Ascending aorta (tissue), 2 donors: ENCODE measurements at regions of chr6 and their contacts with region 1.

Region 1: GRCh38 chr6:107957909-107958688 is at the start of gene SEC63:
- DNase-seq: peak; percentile 89 to 98
- H3K4me3 ChIP-seq: peak within 1 kb of the TSS; percentile 78 to 87
- H3K27ac ChIP-seq: peak within 1 kb of the TSS; percentile 72 to 83
- H3K4me1 ChIP-seq: peaks cover 0 to 21% of the 10 kb centered on the region in 2 donors
- H3K27me3 ChIP-seq: no peaks in the 10 kb centered on the region
- CTCF ChIP-seq: no peak
- total RNA-seq, gene SEC63: 13.1 TPM

Region 2: DNA sequence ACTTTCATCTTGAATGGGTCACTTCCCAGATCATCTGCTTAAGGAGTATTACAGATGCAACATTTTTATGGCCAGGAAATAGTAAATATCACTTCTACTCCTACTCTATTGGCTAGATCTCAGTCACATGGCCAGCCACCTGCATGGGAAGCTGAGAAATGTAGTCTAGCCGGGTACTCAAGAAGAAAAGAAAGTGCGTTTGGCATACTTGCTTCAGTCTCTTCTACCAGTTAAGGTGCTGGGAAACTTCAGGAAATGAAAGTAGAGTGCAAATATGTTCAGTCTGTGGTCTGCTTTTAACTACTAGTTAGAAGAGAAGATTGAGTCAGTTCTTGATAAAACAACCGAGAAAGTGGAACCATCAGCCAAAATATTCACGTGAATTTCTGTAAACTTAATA is 627.9 kb before region 1 on chr6:
- intact Hi-C with region 1: no loop called
- DNase-seq: no peak
- H3K4me3 ChIP-seq: no peak overlapping the region
- H3K27ac ChIP-seq: no peak overlapping the region
- H3K4me1 ChIP-seq: no peaks in the 10 kb centered on the region
- H3K27me3 ChIP-seq: no peaks in the 10 kb centered on the region
- CTCF ChIP-seq: no peak

Region 3: GRCh38 chr6:107459283-107460082 is 498.6 kb before region 1 on chr6 and contains the start of gene PDSS2:
- intact Hi-C with region 1: loop called (anchors 10 kb)
- DNase-seq: peak; percentile 98 to 99
- H3K4me3 ChIP-seq: peak within 1 kb of the TSS; percentile 82 to 92
- H3K27ac ChIP-seq: peak within 1 kb of the TSS; percentile 80 to 91
- H3K4me1 ChIP-seq: peaks cover 3 to 5% of the 10 kb centered on the region in 2 donors
- H3K27me3 ChIP-seq: no peaks in the 10 kb centered on the region
- CTCF ChIP-seq: peak in 2 of 3 experiments; percentile 39 to 53
- total RNA-seq, gene PDSS2: 0.85 TPM

Region 4: DNA sequence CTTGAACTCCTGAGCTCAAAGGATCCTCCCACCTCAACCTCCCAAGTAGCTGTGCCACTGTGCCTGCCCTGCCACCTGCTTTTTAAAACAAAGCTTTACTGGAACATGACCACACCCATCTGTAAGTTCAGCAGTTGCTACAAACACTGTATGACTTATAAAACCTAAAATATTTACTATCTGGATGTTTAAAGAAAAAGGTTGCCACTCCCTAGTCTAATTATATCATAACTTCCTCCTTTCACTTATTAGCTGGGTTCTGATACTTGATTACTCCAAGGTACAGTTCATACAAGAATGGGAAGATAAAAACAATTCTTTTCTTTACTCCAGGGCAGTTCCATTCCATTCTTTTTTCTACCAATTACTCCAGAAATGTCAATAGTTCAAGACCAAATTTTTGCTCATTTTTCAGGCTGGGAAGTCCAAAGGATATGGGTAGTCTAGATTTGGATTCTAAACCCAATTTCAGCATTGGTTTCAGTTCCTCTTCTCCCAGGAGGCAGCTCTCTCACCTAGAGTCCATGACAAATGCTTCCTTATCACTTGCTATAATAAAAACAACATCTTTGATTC is 63.2 kb before region 1 on chr6:
- intact Hi-C with region 1: no loop called
- DNase-seq: no peak
- H3K4me3 ChIP-seq: no peak overlapping the region
- H3K27ac ChIP-seq: no peak overlapping the region
- H3K4me1 ChIP-seq: no peaks in the 10 kb centered on the region
- H3K27me3 ChIP-seq: no peaks in the 10 kb centered on the region
- CTCF ChIP-seq: no peak

Region 5: DNA sequence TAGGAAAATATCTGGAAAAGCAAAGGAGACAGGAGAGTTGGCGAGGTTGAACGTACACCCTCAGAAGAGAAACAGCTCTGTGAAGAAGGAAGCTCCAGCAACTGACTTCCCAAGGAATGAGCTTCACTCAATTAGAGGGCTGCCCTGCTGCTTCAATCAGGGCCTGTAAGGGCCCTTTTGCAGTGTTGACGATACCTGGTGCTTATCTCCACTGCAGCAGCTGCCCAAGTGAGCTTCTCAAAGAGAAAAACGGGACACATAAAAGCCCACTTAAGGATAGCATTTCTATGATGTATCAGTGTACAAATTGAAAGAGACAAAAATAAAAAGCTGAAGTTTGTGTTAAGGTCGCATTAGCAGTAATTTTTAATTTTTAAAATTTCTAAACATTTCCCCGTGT is 16.5 kb before region 1 on chr6:
- intact Hi-C with region 1: no loop called
- DNase-seq: no peak
- H3K4me3 ChIP-seq: no peak overlapping the region
- H3K27ac ChIP-seq: no peak overlapping the region
- H3K4me1 ChIP-seq: peaks cover 0 to 5% of the 10 kb centered on the region in 2 donors
- H3K27me3 ChIP-seq: no peaks in the 10 kb centered on the region
- CTCF ChIP-seq: no peak

Region 6: GRCh38 chr6:108074359-108075144 is 116.5 kb after region 1 on chr6 and contains the start of gene OSTM1:
- intact Hi-C with region 1: loop called (anchors 1 kb)
- DNase-seq: peak; percentile 32 to 95
- H3K4me3 ChIP-seq: peak within 1 kb of the TSS; percentile 87 to 89
- H3K27ac ChIP-seq: peak within 1 kb of the TSS; percentile 74 to 78
- H3K4me1 ChIP-seq: peaks cover 3 to 10% of the 10 kb centered on the region in 2 donors
- H3K27me3 ChIP-seq: no peaks in the 10 kb centered on the region
- CTCF ChIP-seq: no peak
- total RNA-seq, gene OSTM1: 78.7 TPM

Region 7: DNA sequence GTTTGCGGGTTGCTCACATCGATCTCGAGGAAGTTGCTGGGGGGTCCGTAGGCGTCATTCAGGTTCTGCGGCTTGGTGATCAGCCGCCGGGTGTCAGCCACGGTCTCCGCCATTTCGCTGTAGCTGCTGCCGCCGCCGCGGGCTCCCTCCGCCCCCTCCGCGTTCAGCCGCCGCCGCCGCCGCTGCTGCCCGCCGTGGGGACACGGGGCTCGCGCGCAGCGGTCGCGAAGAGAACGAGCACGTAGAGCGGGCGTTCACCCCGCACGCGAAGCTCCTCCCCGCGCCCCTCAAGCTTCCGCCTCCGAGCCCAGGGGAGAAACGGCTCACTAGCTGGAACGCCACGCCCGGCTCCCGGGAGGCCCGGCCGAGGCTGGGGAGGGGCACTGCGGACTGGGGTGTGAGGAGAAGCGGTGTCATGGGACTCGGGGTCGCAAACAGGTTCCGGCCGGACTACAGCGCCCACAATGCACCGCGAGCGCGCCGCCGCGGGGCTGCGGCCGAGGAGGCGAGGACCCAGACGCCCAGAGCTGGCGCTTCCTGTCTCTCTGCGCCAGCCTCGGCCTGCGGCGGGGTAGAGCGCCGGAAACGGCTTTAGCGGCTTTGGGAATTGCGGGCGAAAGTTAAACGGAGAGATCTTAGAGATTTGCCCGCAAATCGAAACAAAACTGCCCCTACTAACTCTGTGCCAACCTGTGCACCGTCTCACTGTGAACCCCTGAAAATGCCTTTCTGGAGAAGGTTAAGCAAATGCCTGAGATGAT is 302.9 kb after region 1 on chr6 and contains the start of gene SNX3:
- intact Hi-C with region 1: loop called (anchors 1 kb)
- DNase-seq: peak; percentile 91 to 98
- H3K4me3 ChIP-seq: peak within 1 kb of the TSS; percentile 88 to 91
- H3K27ac ChIP-seq: peak within 1 kb of the TSS; percentile 93 to 95
- H3K4me1 ChIP-seq: peaks cover 0 to 12% of the 10 kb centered on the region in 2 donors
- H3K27me3 ChIP-seq: no peaks in the 10 kb centered on the region
- CTCF ChIP-seq: no peak
- total RNA-seq, gene SNX3: 112 TPM

Region 8: GRCh38 chr6:108294727-108295625 is 336.9 kb after region 1 on chr6 and contains the start of gene AFG1L:
- intact Hi-C with region 1: loop called (anchors 5 kb)
- DNase-seq: peak; percentile 75 to 95
- H3K4me3 ChIP-seq: peak within 1 kb of the TSS; percentile 72 to 91
- H3K27ac ChIP-seq: peak within 1 kb of the TSS; percentile 74 to 90
- H3K4me1 ChIP-seq: peaks cover 4 to 5% of the 10 kb centered on the region in 2 donors
- H3K27me3 ChIP-seq: no peaks in the 10 kb centered on the region
- CTCF ChIP-seq: peak in 1 of 3 experiments; percentile 2
- total RNA-seq, gene AFG1L: 0.53 TPM

Region 9: DNA sequence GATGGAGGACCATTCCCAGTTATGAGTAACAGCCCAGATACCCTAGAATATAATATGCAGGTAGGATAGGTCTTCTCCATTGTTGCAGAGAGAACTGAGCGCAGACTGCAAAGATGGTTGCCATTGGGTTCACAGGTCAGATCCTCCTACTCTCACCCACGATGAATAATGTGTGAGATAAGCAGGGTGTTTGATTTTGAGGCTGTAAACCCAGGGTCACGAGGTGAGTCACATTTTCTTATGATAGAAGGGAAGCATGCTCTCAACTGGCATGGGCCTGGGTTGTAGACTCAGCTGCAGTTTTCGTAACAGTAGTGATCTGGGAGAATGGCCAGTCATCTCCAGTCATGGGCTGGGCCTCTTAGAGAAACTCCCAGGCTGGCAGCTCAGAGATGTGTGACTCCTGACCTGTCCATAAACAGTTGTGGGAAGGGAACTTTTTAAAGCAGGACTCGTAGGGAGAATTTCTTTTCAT is 1350.0 kb after region 1 on chr6:
- intact Hi-C with region 1: loop called (anchors 5 kb)
- DNase-seq: peak; percentile 80 to 92
- H3K4me3 ChIP-seq: no peak overlapping the region
- H3K27ac ChIP-seq: peak overlapping the region; percentile 16 to 73
- H3K4me1 ChIP-seq: peaks cover 0 to 16% of the 10 kb centered on the region in 2 donors
- H3K27me3 ChIP-seq: no peaks in the 10 kb centered on the region
- CTCF ChIP-seq: no peak